T-cell (primary cell): ENCODE measurements at regions of chr16 and their contacts with region 1.

Region 1: DNA sequence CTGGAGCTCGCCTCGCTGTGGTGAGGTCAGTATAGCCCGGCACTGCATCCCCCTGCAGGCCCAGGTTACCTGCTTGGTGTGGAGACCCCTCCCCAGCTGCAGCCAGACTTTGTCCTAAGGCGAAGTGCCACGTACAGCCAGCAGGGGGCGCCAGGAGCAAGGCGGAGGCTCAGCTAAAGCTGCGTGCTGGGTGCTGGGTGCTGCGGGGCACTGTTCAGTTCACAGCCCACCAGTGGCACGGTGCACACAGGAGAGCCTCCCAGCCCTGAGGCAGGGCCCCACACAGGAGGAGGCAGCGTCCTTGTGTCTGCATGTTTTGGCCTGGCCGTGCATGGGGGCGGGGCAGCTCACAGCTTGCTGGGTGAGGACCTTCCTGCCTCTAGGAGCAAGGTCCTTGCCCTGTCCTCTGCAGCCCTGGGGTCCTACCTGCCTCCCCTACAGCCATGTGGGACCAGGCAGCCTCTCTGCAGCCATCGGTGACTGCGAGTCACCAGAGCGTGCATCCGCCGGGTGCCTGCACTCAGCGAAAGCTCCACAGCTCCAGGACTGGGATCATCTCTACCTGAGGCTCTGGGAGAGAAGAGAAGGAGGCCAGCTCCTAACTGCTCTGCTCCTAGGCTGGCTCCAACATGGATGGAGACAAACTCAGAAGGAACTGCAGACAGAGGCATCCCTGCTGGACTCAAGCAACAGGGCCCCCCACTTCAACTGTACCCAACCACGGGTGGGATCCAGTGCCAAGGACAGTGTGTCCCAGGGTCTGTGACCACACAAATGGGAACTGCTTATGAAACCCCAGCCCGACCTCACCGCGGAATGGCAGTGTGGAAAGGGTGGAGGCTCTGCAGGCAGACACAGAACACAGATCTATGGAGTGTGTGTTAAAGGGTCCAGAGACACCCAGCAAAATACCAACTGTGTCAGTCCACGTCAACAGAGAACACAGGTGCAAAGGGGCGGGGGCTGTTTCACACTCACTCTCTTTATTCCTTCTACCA is 19.0 kb downstream of the SLC7A5 start:
- DNase-seq: peak; percentile 49 to 85 (median 74)
- ATAC-seq: peak; percentile 53 to 66 (median 58)
- H3K4me3 ChIP-seq: no peak overlapping the region
- H3K4me3 Mint-ChIP-seq: no peak overlapping the region
- H3K27ac ChIP-seq: no peak overlapping the region
- H3K27ac Mint-ChIP-seq: peak overlapping the region in 1 of 2 donors; percentile 16
- H3K4me1 ChIP-seq: peaks cover 0 to 43% of the 10 kb centered on the region in 2 experiments
- H3K4me1 Mint-ChIP-seq: peaks cover 7 to 26% (median 18%) of the 10 kb centered on the region in 3 donors
- H3K27me3 ChIP-seq: no peaks in the 10 kb centered on the region
- H3K27me3 Mint-ChIP-seq: no peaks in the 10 kb centered on the region

Region 2: GRCh38 chr16:87778830-87779579 is 71.3 kb before region 1 on chr16:
- CTCF ChIA-PET with region 1: interaction called, 4 to 28 read pairs
- POLR2A ChIA-PET with region 1: no interaction called
- DNase-seq: peak; percentile 80 to 96 (median 88)
- ATAC-seq: peak; percentile 87 to 91 (median 88)
- H3K4me3 ChIP-seq: no peak overlapping the region
- H3K4me3 Mint-ChIP-seq: peak overlapping the region; percentile 5 to 78 (median 34)
- H3K27ac ChIP-seq: no peak overlapping the region
- H3K27ac Mint-ChIP-seq: peak overlapping the region; percentile 76 to 79
- H3K4me1 ChIP-seq: peaks cover 25 to 44% of the 10 kb centered on the region in 2 experiments
- H3K4me1 Mint-ChIP-seq: peaks cover 38 to 42% (median 41%) of the 10 kb centered on the region in 3 donors
- H3K27me3 ChIP-seq: peaks cover 0 to 8% of the 10 kb centered on the region in 2 experiments
- H3K27me3 Mint-ChIP-seq: no peaks in the 10 kb centered on the region

Region 3: DNA sequence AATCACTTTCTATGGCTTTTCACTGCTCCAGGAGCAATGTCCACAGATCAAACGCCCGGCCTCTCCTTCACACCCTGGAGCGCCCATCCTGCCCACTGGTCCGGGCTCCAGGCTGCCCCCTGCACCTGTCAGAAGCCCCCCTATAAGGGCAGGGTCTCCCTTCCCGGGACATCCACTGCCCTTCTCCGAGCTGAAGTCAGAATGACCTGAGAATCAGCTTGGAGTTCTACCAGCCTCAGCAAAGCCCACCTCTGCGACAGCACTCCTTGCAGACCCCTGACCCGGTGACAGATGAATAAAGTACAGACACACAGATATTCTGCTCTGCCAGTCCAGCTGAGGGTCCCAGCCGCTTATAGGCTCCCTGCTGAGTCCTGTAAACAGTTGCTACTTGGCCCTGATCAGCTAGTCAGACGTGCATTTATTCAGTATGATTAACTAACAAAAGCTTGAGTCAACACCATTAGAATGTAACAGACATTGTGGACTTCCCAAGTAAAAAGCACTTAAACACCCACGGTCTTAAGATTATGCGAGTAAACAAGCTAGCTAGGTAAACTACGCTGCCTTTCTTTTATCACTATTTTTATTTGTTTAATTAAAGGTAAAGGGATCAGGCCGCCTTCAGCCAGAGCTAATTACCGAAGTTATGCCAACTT is 14.2 kb after region 1 on chr16:
- CTCF ChIA-PET with region 1: interaction called, 6 to 60 read pairs
- POLR2A ChIA-PET with region 1: interaction called in 1 of 2 experiments, 9 read pairs
- DNase-seq: no peak
- ATAC-seq: no peak
- H3K4me3 ChIP-seq: no peak overlapping the region
- H3K4me3 Mint-ChIP-seq: no peak overlapping the region
- H3K27ac ChIP-seq: no peak overlapping the region
- H3K27ac Mint-ChIP-seq: peak overlapping the region; percentile 66 to 77
- H3K4me1 ChIP-seq: peaks cover 3 to 63% of the 10 kb centered on the region in 2 experiments
- H3K4me1 Mint-ChIP-seq: peaks cover 46 to 64% (median 51%) of the 10 kb centered on the region in 3 donors
- H3K27me3 ChIP-seq: no peaks in the 10 kb centered on the region
- H3K27me3 Mint-ChIP-seq: no peaks in the 10 kb centered on the region

Region 4: DNA sequence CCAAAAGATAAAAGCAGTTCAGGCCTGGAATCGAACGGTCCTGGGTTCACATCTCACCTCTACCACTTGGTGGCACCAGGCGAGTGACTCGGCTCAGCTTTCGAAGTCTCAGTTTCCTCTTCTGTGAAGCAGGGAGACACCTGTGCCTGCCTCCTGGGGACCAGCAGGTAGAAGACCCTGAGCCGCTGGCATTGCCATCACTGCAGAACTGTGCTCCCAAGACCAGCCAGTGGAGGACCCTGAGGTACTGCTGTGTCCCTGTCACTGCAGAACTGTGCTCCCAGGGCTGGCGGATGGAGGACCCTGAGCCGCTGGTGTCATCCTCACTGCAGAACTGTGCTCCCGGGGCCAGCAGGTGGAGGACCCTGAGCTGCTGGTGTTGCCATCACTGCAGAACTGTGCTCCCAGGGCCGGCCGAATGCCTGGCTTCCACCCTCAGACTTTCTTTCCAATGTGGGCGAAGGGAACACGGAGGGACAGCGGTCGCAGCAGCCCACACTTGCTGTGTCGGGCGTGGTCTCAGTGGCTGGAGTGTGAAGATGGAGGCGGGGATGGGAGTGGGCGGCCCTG is 27.7 kb after region 1 on chr16:
- CTCF ChIA-PET with region 1: interaction called, 5 to 60 read pairs
- POLR2A ChIA-PET with region 1: no interaction called
- DNase-seq: no peak
- ATAC-seq: peak in 1 of 4 experiments; percentile 13
- H3K4me3 ChIP-seq: no peak overlapping the region
- H3K4me3 Mint-ChIP-seq: no peak overlapping the region
- H3K27ac ChIP-seq: no peak overlapping the region
- H3K27ac Mint-ChIP-seq: no peak overlapping the region
- H3K4me1 ChIP-seq: peaks cover 0 to 11% of the 10 kb centered on the region in 2 experiments
- H3K4me1 Mint-ChIP-seq: peaks cover 7 to 9% (median 8%) of the 10 kb centered on the region in 3 donors
- H3K27me3 ChIP-seq: peaks cover 0 to 21% of the 10 kb centered on the region in 2 experiments
- H3K27me3 Mint-ChIP-seq: peaks cover 3 to 9% of the 10 kb centered on the region in 2 donors